ENCODE measurements at regions of chr10 and their contacts with region 1.

Region 1: GRCh38 chr10:128069351-128070051 is 56.7 kb downstream of the MKI67 start:
- DNase-seq: peak; percentile 61 to 76
- H3K4me3 ChIP-seq: no peak overlapping the region
- H3K4me3 Mint-ChIP-seq: no peak overlapping the region
- H3K27ac Mint-ChIP-seq: no peak overlapping the region
- H3K4me1 ChIP-seq: no peaks in the 10 kb centered on the region
- H3K4me1 Mint-ChIP-seq: no peaks in the 10 kb centered on the region
- H3K27me3 ChIP-seq: no peaks in the 10 kb centered on the region
- H3K27me3 Mint-ChIP-seq: peaks cover 8% of the 10 kb centered on the region
- CTCF ChIP-seq: peak; percentile 75 to 90

Region 2: GRCh38 chr10:127715782-127716378 is 353.6 kb before region 1 on chr10:
- CTCF ChIA-PET with region 1: interaction called, 4 read pairs
- POLR2A ChIA-PET with region 1: no interaction called
- intact Hi-C with region 1: loop called (anchors 1 kb)
- DNase-seq: peak in 1 of 2 experiments; percentile 20
- H3K4me3 ChIP-seq: no peak overlapping the region
- H3K4me3 Mint-ChIP-seq: no peak overlapping the region
- H3K27ac Mint-ChIP-seq: no peak overlapping the region
- H3K4me1 ChIP-seq: no peaks in the 10 kb centered on the region
- H3K4me1 Mint-ChIP-seq: no peaks in the 10 kb centered on the region
- H3K27me3 ChIP-seq: no peaks in the 10 kb centered on the region
- H3K27me3 Mint-ChIP-seq: no peaks in the 10 kb centered on the region
- CTCF ChIP-seq: peak; percentile 28 to 54

Region 3: DNA sequence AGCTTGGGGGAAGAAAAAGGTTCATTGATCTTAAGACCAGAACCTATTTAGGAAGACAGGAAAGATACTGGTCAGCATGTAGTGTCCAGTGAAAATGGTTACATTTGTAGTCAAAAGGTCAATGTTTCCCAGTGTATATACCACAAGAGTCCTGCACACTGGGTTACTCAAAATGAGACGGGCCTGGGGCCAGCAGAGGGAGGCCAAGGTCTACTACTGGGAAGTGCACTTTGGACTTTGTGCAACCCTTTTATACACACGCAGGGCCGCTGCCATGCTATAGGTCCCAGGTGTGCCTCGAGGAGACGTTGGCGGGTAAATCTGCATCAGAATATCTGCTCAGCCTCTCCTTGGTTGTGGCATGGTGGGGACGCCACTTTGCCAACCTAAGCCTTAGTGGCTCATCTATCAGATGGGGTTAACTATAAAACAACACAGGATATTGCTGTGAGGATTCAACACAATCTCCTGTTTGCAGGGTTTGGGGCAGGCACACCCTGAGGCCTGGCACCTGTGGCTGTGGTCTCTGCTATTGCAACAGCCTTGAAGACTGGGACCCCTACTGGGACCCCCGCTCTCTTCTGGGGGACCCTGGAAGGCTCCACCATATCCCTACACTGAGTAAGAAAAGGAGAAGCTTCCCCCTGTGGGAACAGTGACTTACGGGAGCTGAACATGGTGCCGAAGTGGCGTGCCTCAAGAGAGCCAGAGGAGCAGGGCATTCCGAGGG is 196.5 kb before region 1 on chr10:
- CTCF ChIA-PET with region 1: interaction called, 3 read pairs
- POLR2A ChIA-PET with region 1: no interaction called
- intact Hi-C with region 1: loop called (anchors 1 kb)
- DNase-seq: peak; percentile 65 to 68
- H3K4me3 ChIP-seq: no peak overlapping the region
- H3K4me3 Mint-ChIP-seq: no peak overlapping the region
- H3K27ac Mint-ChIP-seq: no peak overlapping the region
- H3K4me1 ChIP-seq: 0 out of 2 replicates have a peak, but pooled peaks cover 6% of the 10 kb centered on the region
- H3K4me1 Mint-ChIP-seq: peaks cover 6% of the 10 kb centered on the region
- H3K27me3 ChIP-seq: no peaks in the 10 kb centered on the region
- H3K27me3 Mint-ChIP-seq: no peaks in the 10 kb centered on the region
- CTCF ChIP-seq: peak; percentile 53 to 74

Region 4: DNA sequence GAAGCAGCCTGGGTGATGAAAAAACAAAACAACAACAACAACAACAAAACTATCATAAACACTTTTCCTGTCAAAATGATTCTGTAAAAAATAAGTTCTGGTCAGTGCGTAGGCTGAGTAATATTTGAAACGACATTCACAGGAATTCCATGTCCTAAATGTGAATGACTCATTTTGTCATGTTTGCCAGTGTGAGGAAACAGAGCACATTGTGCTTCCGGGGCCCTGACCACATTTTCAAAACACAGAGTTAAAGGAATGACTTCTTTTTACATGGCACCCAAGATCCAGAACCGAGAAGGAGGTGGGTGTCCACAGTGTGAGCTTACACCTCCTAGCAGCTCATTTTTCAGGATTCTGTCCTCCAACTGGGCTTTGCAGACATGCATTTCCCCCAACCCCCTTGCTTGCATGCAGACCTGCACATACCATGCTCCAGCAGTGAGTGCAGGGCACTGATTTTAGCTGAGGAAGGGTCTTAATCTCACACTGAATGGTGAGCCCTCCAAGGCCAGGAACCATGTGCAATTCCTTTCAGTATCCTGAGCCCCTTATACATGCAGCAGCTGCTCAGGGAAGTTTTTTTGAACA is 179.8 kb before region 1 on chr10:
- CTCF ChIA-PET with region 1: no interaction called
- POLR2A ChIA-PET with region 1: no interaction called
- intact Hi-C with region 1: loop called (anchors 5 kb)
- DNase-seq: no peak
- H3K4me3 ChIP-seq: no peak overlapping the region
- H3K4me3 Mint-ChIP-seq: no peak overlapping the region
- H3K27ac Mint-ChIP-seq: no peak overlapping the region
- H3K4me1 ChIP-seq: peaks cover 21% of the 10 kb centered on the region
- H3K4me1 Mint-ChIP-seq: peaks cover 6% of the 10 kb centered on the region
- H3K27me3 ChIP-seq: no peaks in the 10 kb centered on the region
- H3K27me3 Mint-ChIP-seq: no peaks in the 10 kb centered on the region
- CTCF ChIP-seq: no peak

Region 5: DNA sequence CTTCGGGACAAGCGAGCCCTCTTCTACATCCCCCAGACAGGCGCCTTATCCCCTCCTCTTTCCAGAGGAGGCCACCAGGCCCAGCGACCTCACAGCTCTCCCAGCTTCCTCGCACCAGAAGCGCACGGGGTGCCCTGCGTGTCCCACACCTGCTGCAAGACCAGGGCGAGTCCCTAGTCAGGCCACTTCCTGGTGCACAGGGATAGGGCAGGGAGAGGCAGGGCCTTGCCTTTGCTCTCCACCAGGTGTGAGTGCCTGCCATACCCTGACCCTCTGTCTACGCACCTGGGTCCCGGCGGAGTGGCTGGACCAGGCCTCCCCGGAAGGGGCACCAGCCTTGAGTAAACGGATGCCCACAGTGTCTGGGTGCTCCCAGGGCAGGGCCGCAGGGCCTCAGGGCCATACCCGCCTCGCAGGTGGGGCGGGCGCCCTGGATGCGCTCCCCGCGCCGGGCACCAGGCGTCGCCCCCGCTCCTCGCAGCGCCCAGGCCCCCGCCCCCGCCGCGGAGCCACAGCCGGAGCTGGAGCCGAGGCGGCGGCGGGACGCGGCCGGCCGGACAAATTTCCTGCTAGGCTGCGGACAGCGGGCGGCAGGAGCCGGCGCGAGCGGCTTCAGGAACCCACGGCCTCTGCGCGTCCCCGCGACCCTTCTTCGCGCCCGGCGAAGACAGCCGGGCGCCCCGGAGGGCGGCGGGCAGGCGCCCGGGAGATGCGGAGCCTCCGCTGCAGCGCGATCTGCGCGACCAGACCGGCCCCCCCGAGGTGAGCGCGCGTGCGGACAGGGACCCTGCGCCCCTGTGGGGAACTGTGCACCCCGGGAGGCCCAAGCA is 162.7 kb before region 1 on chr10 and contains the start of gene PTPRE:
- CTCF ChIA-PET with region 1: interaction called, 21 read pairs
- POLR2A ChIA-PET with region 1: no interaction called
- intact Hi-C with region 1: loop called (anchors 1 kb)
- DNase-seq: peak; percentile 56 to 86
- H3K4me3 ChIP-seq: peak within 1 kb of the TSS; percentile 54
- H3K4me3 Mint-ChIP-seq: peak within 1 kb of the TSS; percentile 30
- H3K27ac Mint-ChIP-seq: no peak within 1 kb of the TSS
- H3K4me1 ChIP-seq: peaks cover 23% of the 10 kb centered on the region
- H3K4me1 Mint-ChIP-seq: peaks cover 9% of the 10 kb centered on the region
- H3K27me3 ChIP-seq: no peaks in the 10 kb centered on the region
- H3K27me3 Mint-ChIP-seq: peaks cover 11% of the 10 kb centered on the region
- CTCF ChIP-seq: peak; percentile 39 to 89
- total RNA-seq, gene PTPRE: 0.46 and 0.50 TPM in 2 replicates

Region 6: DNA sequence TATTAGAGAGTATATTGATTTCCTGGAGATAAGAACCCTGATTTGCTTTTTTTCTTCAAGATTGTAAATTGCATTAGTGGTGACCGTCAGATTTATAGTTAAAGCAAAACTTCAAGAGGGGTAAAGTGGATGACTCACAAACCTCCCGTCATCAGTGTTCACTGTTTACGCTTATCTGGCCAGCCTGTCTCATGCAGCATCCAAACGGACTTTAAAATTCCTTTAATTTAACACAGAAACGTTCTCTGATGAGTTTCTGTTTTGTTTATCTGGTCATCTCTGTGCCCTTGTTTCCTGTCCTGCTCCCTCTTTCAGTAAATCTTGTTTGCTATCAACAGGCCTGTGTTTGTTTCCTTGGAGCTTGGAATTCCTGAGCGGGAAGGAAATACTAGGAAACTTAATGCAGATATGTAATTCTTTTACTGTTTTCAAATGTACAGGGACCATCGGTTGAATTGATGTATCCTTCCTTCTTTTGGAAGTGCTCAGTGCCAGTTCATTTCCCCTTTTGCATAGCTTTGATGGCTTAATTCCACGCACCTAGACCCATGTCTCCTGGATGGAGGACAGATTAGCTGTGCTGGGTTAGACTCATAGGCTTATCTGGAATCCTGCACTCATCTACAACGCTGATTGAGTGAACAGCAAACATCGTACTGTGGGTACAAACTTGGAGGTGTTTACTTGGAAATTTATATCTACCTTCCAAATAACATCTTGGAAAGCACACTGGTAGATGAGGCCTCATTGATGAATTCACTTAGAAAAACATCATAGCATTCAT is 141.3 kb before region 1 on chr10:
- CTCF ChIA-PET with region 1: no interaction called
- POLR2A ChIA-PET with region 1: no interaction called
- intact Hi-C with region 1: no loop called
- DNase-seq: no peak
- H3K4me3 ChIP-seq: no peak overlapping the region
- H3K4me3 Mint-ChIP-seq: no peak overlapping the region
- H3K27ac Mint-ChIP-seq: no peak overlapping the region
- H3K4me1 ChIP-seq: 0 out of 2 replicates have a peak, but pooled peaks cover 4% of the 10 kb centered on the region
- H3K4me1 Mint-ChIP-seq: no peaks in the 10 kb centered on the region
- H3K27me3 ChIP-seq: no peaks in the 10 kb centered on the region
- H3K27me3 Mint-ChIP-seq: no peaks in the 10 kb centered on the region
- CTCF ChIP-seq: no peak

Region 7: GRCh38 chr10:128011175-128011979 is 58.1 kb before region 1 on chr10:
- CTCF ChIA-PET with region 1: interaction called, 10 read pairs
- POLR2A ChIA-PET with region 1: no interaction called
- intact Hi-C with region 1: loop called (anchors 1 kb)
- DNase-seq: peak; percentile 71 to 90
- H3K4me3 ChIP-seq: no peak overlapping the region
- H3K4me3 Mint-ChIP-seq: no peak overlapping the region
- H3K27ac Mint-ChIP-seq: no peak overlapping the region
- H3K4me1 ChIP-seq: no peaks in the 10 kb centered on the region
- H3K4me1 Mint-ChIP-seq: no peaks in the 10 kb centered on the region
- H3K27me3 ChIP-seq: peaks cover 2% of the 10 kb centered on the region
- H3K27me3 Mint-ChIP-seq: no peaks in the 10 kb centered on the region
- CTCF ChIP-seq: peak; percentile 95 to 98

Region 8: DNA sequence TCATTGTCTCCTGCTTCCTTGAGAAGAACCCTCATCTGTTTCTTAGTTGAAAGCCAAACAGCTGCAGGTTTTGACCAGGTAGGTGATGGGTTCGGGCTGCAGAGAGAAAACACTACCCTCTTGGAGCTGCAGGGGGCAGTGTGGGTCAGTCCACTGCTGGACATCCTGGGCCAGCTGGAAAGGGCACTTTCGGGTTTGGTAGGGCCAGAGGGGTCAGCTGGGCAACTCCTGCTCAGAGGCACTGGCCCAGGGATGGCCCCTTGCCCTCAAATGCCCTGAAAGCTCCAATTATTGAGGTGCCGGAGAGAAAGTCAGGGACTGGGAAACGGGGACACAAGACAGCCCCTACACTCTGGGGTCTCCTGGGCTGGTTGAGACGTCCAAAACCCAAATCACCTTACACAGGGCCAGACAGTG is 33.9 kb before region 1 on chr10:
- CTCF ChIA-PET with region 1: interaction called, 15 read pairs
- POLR2A ChIA-PET with region 1: no interaction called
- intact Hi-C with region 1: loop called (anchors 1 kb)
- DNase-seq: peak in 1 of 2 experiments; percentile 64
- H3K4me3 ChIP-seq: no peak overlapping the region
- H3K4me3 Mint-ChIP-seq: no peak overlapping the region
- H3K27ac Mint-ChIP-seq: no peak overlapping the region
- H3K4me1 ChIP-seq: no peaks in the 10 kb centered on the region
- H3K4me1 Mint-ChIP-seq: no peaks in the 10 kb centered on the region
- H3K27me3 ChIP-seq: no peaks in the 10 kb centered on the region
- H3K27me3 Mint-ChIP-seq: peaks cover 6% of the 10 kb centered on the region
- CTCF ChIP-seq: peak; percentile 63 to 71

Measured in Caco-2 (cell line).